ENCODE measurements at regions of chr2 and their contacts with region 1.

Region 1: GRCh38 chr2:156399722-156400244 is 36.4 kb upstream of the GPD2 start:
- DNase-seq: no peak
- H3K4me3 ChIP-seq: peak overlapping the region; percentile 20 to 52 (median 46)
- H3K27ac ChIP-seq: peak overlapping the region; percentile 92 to 98 (median 97)
- H3K4me1 ChIP-seq: peaks cover 10 to 12% of the 10 kb centered on the region in 2 donors
- H3K27me3 ChIP-seq: no peaks in the 10 kb centered on the region
- CTCF ChIP-seq: no peak
- POLR2A ChIP-seq: no peak

Region 2: GRCh38 chr2:156341452-156342253 is 58.1 kb before region 1 on chr2:
- intact Hi-C with region 1: loop called (anchors 10 kb)
- DNase-seq: peak; percentile 92 to 93
- H3K4me3 ChIP-seq: peak overlapping the region; percentile 67 to 95 (median 87)
- H3K27ac ChIP-seq: peak overlapping the region; percentile 100
- H3K4me1 ChIP-seq: peaks cover 20 to 23% of the 10 kb centered on the region in 2 donors
- H3K27me3 ChIP-seq: no peaks in the 10 kb centered on the region
- CTCF ChIP-seq: peak in 1 of 6 experiments; percentile 6
- POLR2A ChIP-seq: peak; percentile 80 to 84